IMR-90 (cell line): ENCODE measurements at regions of chrX and their contacts with region 1.

Region 1: DNA sequence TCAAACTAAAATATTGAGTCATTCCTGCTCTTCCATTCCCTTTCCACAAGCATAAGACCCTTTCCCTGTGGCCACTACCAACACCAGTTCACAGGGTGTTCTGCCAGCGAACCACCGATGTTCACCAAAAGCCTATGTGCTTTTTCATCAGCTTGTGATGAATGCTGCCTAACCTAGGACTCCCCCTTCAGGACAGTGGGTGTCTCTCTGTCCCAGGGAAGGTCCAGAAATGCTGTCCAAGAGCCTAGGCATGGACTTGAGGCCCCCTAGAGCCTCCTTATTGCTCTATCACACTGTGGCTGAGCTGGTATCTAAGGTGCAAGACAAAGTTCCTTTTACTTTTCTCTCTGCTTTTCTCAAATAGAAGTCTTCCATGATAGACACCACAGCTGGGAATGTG is 1015.6 kb downstream of the PCDH19 start:
- DNase-seq: no peak
- ATAC-seq: no peak
- H3K4me3 ChIP-seq: no peak overlapping the region
- H3K27ac ChIP-seq: no peak overlapping the region
- H3K4me1 ChIP-seq: no peaks in the 10 kb centered on the region
- H3K27me3 ChIP-seq: no peaks in the 10 kb centered on the region
- CTCF ChIP-seq: no peak
- POLR2A ChIP-seq: no peak
- RAD21 ChIP-seq: no peak

Region 2: DNA sequence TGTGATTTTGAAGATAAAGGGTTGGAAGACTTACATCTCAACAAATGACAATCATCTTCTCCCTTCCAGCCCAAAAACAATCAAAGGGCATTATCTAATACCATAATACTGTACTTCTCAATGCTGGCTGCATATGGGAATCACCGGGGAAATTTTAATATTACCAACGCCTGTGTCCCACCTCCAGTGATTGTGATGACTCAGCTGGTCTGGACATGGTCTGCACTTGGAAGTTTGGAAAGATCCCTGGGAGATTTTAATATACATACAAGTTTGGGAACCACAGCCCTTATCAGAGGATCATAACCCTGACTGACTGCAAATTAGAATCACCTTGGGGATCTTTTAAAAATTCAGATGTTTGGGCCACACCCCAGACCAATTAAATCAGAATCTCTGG is 1605.0 kb after region 1 on chrX:
- CTCF ChIA-PET with region 1: no interaction called
- POLR2A ChIA-PET with region 1: interaction called, 12 read pairs
- dilution Hi-C with region 1: no loop called
- in situ Hi-C with region 1: no loop called
- intact Hi-C with region 1: no loop called
- DNase-seq: no peak
- ATAC-seq: no peak
- H3K4me3 ChIP-seq: no peak overlapping the region
- H3K27ac ChIP-seq: no peak overlapping the region
- H3K4me1 ChIP-seq: peaks cover under 1% of the 10 kb centered on the region; the same call in 1 of the 2 replicates
- H3K27me3 ChIP-seq: no peaks in the 10 kb centered on the region
- CTCF ChIP-seq: no peak
- POLR2A ChIP-seq: no peak
- RAD21 ChIP-seq: no peak